Tibial artery (tissue), 4 donors: ENCODE measurements at regions of chrX and their contacts with region 1.

Region 1: GRCh38 chrX:14029425-14030173 is at the start of gene GEMIN8:
- DNase-seq: peak; percentile 76 to 91
- H3K4me3 ChIP-seq: peak within 1 kb of the TSS; percentile 56 to 58
- H3K27ac ChIP-seq: peak within 1 kb of the TSS; percentile 71 to 85
- H3K4me1 ChIP-seq: peaks cover 0 to 21% (median 8%) of the 10 kb centered on the region in 4 donors
- H3K27me3 ChIP-seq: no peaks in the 10 kb centered on the region
- CTCF ChIP-seq: no peak

Region 2: DNA sequence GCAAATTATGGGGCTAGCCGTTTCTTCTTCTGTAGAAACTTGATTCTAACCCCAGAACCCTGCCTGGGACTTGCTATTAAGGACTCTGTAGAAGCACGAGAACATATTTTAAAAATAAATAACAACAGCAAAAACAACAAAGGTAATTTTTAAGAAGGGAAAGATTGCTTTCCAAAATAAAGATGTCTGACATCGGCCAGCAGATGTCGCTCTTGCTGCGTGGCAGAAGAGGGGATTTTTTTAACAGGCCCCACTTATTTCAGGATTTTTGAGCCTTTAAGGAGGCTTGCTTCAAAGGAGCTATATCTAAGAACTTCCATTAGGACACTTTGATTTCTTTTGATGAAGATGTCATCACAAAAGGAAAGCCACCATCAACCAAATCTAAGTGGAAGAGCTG is 523.0 kb before region 1 on chrX:
- intact Hi-C with region 1: loop called (anchors 5 kb)
- DNase-seq: no peak
- H3K4me3 ChIP-seq: no peak overlapping the region
- H3K27ac ChIP-seq: no peak overlapping the region
- H3K4me1 ChIP-seq: no peaks in the 10 kb centered on the region
- H3K27me3 ChIP-seq: no peaks in the 10 kb centered on the region
- CTCF ChIP-seq: peak; percentile 66 to 70

Region 3: DNA sequence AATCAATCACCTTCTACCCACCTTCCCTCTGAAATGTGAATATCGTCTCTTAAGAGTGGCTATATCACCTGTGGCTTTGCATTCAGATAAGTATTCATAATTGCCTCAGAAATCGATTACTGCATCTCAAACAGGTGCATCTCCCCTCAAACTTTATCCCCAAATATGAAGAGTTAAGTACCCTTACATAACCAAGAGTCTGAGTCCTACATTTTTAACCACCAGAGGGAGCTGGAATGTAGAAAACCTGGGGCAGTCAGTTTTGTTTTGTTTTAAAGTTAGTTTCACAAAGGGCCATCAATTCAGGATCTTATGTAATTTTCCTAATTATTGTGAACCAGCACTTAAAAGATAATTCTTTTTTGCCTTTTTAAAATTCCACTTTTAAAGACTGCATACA is 371.0 kb before region 1 on chrX:
- intact Hi-C with region 1: loop called (anchors 5 kb)
- DNase-seq: no peak
- H3K4me3 ChIP-seq: no peak overlapping the region
- H3K27ac ChIP-seq: peak overlapping the region; percentile 22 to 62
- H3K4me1 ChIP-seq: peaks cover 0 to 10% (median 4%) of the 10 kb centered on the region in 4 donors
- H3K27me3 ChIP-seq: no peaks in the 10 kb centered on the region
- CTCF ChIP-seq: peak; percentile 60 to 74

Region 4: GRCh38 chrX:13750204-13750603 is 279.4 kb before region 1 on chrX:
- intact Hi-C with region 1: loop called (anchors 2 kb)
- DNase-seq: no peak
- H3K4me3 ChIP-seq: no peak overlapping the region
- H3K27ac ChIP-seq: no peak overlapping the region
- H3K4me1 ChIP-seq: no peaks in the 10 kb centered on the region
- H3K27me3 ChIP-seq: no peaks in the 10 kb centered on the region
- CTCF ChIP-seq: peak; percentile 51 to 57

Region 5: DNA sequence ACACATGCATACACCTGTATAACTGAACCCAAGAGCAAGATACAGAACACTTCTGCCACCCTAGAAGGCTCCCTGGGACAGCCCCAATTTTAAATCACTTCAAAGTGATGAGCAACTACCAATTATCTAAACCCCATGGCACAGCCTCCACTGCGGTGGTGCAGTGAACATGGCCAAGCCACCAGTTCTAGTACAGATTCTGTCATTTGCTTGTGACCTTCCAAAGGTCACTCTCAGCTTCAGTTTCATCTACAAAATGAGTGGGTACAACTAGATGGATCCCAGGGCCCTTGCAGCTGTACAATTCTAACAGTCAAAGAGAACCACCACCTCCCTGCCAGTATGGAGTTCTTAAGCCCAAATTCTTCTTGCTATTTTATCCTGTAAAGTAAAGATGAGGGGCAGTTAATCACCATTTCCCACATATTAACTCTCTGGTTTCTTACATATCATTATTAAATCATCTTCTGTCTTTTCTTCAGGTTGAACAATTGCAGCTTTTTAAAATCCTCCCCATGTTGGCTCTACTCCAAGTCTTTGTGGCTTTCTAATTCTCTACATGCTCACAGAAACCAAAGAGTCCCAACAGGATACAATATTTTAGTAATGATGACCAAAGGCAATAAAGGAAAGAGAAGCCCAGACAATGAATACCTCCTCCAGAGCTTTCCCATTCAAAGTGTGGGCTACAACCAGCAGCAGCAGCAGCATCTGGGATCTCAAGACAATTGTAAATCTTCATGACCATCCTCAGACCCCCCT is 173.7 kb before region 1 on chrX:
- intact Hi-C with region 1: no loop called
- DNase-seq: no peak
- H3K4me3 ChIP-seq: no peak overlapping the region
- H3K27ac ChIP-seq: no peak overlapping the region
- H3K4me1 ChIP-seq: no peaks in the 10 kb centered on the region
- H3K27me3 ChIP-seq: no peaks in the 10 kb centered on the region
- CTCF ChIP-seq: no peak